Right ventricle myocardium superior (tissue), 1 donor: ENCODE measurements at regions of chr6 and their contacts with region 1.

Region 1: GRCh38 chr6:75493400-75494064 is at the start of gene FILIP1:
- DNase-seq: peak; percentile 67
- ATAC-seq: peak; percentile 84
- total RNA-seq, gene FILIP1: 160 TPM

Region 2: DNA sequence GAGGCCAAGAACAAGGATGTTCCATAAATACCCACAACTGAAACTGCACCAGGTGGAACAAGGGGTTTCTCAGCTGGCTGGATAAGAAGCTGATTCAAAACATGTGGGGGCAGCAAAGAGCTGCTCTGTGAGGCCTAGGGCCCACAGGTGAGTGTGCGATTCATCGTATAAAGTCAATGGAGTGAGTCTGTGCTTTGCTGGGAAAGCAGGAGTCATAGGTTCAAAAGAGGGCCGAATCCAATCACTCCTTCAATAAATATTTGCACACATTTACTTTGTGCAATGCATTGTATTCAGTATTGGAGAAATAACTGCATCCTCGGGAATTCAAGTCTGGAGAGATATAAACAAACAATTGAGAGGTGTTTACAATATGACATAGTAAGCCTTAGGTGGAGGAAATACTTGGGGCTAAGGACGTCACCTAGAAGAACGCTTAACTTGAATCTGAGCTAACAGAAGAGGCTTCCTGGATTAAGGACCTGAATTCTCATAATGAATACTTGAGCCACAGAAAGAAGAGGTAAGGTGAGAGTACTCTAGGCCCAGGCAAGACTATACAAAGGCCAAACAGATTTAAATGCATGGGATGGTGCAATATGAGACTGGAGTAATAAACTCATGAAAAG is 125.3 kb before region 1 on chr6:
- intact Hi-C with region 1: loop called (anchors 5 kb)
- DNase-seq: no peak
- ATAC-seq: peak; percentile 73

Region 3: DNA sequence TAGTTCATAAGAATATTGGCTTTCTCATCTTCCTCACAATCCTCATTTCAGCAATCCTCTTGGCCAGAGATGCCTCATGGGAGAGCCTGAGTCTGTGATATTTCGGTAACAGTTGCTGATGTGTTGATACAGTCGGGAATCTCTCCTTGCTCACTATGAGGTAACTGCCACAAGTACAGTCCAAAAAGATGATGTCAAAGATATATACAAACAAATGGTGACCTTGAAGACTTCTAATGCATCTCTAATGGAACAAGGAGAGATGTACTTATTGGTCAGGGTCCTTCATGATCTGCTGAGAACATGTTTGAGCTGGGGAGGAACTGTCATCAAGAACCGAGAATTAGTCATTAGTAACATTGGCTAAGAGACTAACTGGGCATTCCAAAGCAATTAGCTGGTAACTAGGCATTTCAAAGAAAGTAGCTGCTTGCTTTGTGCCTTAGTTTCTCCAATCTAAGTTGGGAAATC is 56.1 kb before region 1 on chr6:
- intact Hi-C with region 1: loop called (anchors 5 kb)
- DNase-seq: no peak
- ATAC-seq: peak; percentile 78

Region 4: GRCh38 chr6:75601304-75602245 is 108.0 kb after region 1 on chr6 and contains the start of gene SENP6:
- intact Hi-C with region 1: no loop called
- DNase-seq: peak; percentile 90
- ATAC-seq: peak; percentile 94
- total RNA-seq, gene SENP6: 46.8 TPM